PC-3 (cell line): ENCODE measurements at regions of chr1 and their contacts with region 1.

Region 1: DNA sequence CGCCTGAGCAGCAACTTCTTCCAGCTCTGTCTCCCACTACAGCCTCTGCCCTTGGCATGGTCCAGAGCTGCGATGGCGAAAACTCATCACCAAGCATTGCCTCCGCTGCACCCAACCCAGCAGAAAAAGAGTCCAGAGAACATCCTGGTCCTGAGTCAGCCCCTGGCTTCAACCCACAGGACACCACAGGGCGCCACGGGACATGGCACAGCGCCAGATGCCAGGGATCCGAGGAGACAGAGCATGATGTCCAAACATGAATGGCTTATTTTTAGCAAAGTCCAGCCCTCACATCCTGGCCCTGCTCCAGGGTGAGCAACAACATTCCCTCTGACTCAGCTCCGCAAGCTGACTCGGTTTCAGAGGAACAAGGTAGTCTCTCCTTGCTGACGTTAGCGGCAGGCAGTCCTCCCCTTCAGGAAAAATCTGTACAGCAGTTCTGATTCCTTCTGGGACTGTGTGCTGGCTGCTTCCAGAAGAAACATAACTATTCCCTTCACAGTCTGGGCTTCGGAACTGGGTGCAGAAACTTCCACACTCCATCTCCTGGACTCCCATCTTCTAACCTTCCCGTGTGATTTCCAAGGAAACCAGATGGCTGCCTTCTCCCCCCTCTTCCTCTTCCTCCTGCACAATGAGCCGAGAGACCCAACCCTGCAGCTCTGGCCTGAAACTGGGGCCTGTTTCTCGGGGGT is 131.3 kb downstream of the TOMM20 start:
- DNase-seq: peak; percentile 98
- ATAC-seq: peak; percentile 67
- H3K4me3 ChIP-seq: peak overlapping the region; percentile 58
- H3K27ac ChIP-seq: peak overlapping the region; percentile 100
- H3K4me1 ChIP-seq: peaks cover 28% of the 10 kb centered on the region
- H3K27me3 ChIP-seq: no peaks in the 10 kb centered on the region
- CTCF ChIP-seq: no peak

Region 2: DNA sequence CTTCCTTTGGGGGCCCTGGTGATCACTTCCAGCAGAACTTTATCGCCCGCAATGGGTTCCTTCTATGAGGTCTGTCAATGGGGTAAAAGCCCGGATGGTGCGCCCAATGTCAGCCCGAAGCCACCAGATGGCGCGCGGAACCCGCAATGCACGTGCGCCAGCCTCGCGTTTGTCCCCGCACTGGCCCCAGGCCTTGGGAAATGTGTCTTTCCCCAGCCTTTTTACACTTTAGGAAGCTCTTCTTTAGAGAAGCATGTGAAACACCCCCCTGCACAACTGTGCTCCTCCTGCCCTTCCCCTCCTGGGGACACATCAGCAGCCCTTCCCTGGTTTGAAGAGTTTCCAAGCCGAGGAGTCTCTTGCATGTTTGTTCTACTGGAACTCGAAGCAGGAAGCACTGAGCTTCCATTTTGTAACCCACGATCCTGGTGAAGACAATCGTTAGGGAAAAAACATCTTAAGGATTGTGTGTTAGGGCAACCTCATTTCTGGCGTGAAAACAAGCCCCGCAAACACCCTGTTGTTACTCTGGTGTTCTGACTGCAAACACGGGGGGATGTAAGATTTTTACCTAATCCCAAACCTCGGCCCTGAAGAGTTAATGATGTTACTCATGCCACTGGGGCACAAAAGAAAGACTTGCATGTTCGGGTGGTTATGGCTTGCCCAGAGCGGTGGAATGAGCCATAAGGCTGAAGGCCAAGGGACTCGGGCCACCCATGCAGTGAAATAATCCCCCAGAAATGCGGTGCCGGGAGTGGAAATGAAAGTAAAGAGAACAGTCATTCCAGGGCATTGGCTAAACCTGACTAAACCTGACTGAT is 498.0 kb before region 1 on chr1:
- CTCF ChIA-PET with region 1: interaction called, 3 read pairs
- POLR2A ChIA-PET with region 1: no interaction called
- intact Hi-C with region 1: loop called (anchors 10 kb)
- DNase-seq: peak; percentile 82
- ATAC-seq: peak; percentile 72
- H3K4me3 ChIP-seq: peak overlapping the region; percentile 40; the same call in 1 of the 2 replicates
- H3K27ac ChIP-seq: peak overlapping the region; percentile 88
- H3K4me1 ChIP-seq: peaks cover 46% of the 10 kb centered on the region
- H3K27me3 ChIP-seq: no peaks in the 10 kb centered on the region
- CTCF ChIP-seq: peak; percentile 84

Region 3: GRCh38 chr1:234656856-234657654 is 340.3 kb before region 1 on chr1:
- CTCF ChIA-PET with region 1: no interaction called
- POLR2A ChIA-PET with region 1: no interaction called
- intact Hi-C with region 1: loop called (anchors 5 kb)
- DNase-seq: peak; percentile 97
- ATAC-seq: peak; percentile 89
- H3K4me3 ChIP-seq: peak overlapping the region; percentile 45
- H3K27ac ChIP-seq: peak overlapping the region; percentile 95
- H3K4me1 ChIP-seq: peaks cover 54% of the 10 kb centered on the region
- H3K27me3 ChIP-seq: no peaks in the 10 kb centered on the region
- CTCF ChIP-seq: no peak

Region 4: DNA sequence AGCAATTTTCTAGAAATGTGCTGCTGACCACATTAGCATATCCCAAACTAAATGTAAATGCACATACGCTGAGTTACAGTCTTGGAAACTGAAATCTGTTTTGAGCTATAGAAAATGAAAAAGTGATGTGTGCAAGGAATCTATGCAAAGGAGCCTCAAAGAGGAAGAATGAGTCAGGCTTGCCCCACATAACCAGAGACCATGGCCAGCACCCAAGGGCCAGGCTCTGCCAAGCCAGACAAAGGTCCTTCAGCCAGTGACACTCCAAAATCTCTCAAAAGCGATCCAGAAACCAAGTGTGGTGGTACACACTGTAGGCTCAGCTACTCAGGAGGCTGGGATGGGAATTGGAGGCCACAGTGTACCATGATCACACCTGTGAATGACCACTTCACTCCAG is 63.9 kb before region 1 on chr1:
- CTCF ChIA-PET with region 1: no interaction called
- POLR2A ChIA-PET with region 1: no interaction called
- intact Hi-C with region 1: no loop called
- DNase-seq: peak; percentile 70
- ATAC-seq: peak; percentile 80
- H3K4me3 ChIP-seq: no peak overlapping the region
- H3K27ac ChIP-seq: peak overlapping the region; percentile 73
- H3K4me1 ChIP-seq: peaks cover 24% of the 10 kb centered on the region
- H3K27me3 ChIP-seq: no peaks in the 10 kb centered on the region
- CTCF ChIP-seq: no peak

Region 5: GRCh38 chr1:234963180-234963903 is 34.0 kb before region 1 on chr1:
- CTCF ChIA-PET with region 1: no interaction called
- POLR2A ChIA-PET with region 1: interaction called, 4 read pairs
- intact Hi-C with region 1: loop called (anchors 1 kb)
- DNase-seq: peak; percentile 87
- ATAC-seq: peak; percentile 50
- H3K4me3 ChIP-seq: peak overlapping the region; percentile 41; the same call in 1 of the 2 replicates
- H3K27ac ChIP-seq: peak overlapping the region; percentile 100
- H3K4me1 ChIP-seq: peaks cover 67% of the 10 kb centered on the region
- H3K27me3 ChIP-seq: no peaks in the 10 kb centered on the region
- CTCF ChIP-seq: no peak

Region 6: GRCh38 chr1:235075188-235075926 is 78.0 kb after region 1 on chr1:
- CTCF ChIA-PET with region 1: no interaction called
- POLR2A ChIA-PET with region 1: interaction called, 8 read pairs
- intact Hi-C with region 1: loop called (anchors 1 kb)
- DNase-seq: peak; percentile 91
- ATAC-seq: peak; percentile 47
- H3K4me3 ChIP-seq: peak overlapping the region; percentile 39
- H3K27ac ChIP-seq: peak overlapping the region; percentile 100
- H3K4me1 ChIP-seq: peaks cover 81% of the 10 kb centered on the region
- H3K27me3 ChIP-seq: no peaks in the 10 kb centered on the region
- CTCF ChIP-seq: no peak

Region 7: DNA sequence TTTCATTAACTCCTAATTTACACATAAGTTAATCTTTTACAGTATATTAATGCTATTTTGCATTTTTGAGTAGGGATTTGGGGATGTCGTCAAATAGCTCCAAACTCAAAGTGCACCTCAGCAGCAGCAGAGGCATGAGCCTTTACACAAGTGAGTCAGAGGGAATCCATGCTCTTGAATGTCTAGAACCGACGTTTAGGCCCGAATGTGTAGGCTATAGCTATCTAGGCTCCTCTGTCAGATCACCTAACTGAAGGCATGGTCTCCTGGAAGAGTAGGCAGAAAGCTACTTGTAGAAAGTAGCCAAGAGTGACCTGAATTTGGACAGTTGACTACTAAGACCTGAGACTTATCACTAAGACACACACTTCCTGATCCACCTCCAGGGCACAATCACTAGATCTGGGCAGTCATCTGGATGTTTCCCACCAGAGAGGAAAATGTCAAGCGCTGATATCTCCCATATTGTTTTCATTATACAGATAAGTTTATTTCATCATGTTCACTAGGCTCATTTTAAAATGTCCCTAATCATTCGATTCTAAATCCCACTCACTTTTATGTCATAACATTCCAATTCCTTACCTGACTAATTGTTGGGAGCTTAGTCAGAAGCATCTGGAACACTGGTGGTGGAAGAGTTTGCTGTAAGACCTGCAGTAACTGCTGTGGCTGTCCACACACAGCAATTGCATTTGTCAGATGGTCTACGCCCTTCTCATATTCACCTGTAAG is 116.0 kb after region 1 on chr1:
- CTCF ChIA-PET with region 1: no interaction called
- POLR2A ChIA-PET with region 1: no interaction called
- intact Hi-C with region 1: no loop called
- DNase-seq: no peak
- ATAC-seq: no peak
- H3K4me3 ChIP-seq: no peak overlapping the region
- H3K27ac ChIP-seq: no peak overlapping the region
- H3K4me1 ChIP-seq: no peaks in the 10 kb centered on the region
- H3K27me3 ChIP-seq: no peaks in the 10 kb centered on the region
- CTCF ChIP-seq: no peak